ENCODE measurements at regions of chr9 and their contacts with region 1.

Region 1: DNA sequence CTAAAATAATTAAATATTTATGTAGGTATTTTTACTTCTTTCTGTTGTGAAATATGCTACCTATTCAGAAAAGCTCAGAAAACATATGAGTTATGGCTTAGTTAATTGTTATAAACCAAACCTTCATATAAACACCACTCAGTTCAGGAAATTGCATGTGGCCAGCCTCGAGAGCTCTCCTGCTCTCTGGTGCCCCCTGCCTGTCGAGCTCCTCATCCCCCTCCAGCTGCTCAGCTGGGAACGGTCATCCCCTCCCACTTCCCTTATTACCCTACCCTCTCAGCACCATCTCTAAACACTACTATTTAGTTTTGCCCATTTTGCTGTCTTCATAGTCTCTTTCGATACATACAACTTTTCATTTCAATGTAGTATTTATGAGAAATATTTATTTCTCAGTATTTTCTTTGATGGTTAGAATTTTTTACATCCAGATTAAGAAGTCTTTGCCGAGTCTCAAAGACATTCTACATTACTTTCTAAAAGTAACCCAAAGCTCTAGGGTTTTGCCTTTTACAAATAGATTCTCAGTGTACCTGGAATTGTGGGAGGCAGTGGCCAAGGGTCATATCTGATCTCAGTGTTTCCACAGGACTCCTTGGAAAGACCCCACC is 51.2 kb upstream of the SEMA4D start:
- DNase-seq: peak; percentile 89
- ATAC-seq: peak; percentile 99
- H3K4me3 Mint-ChIP-seq: no peak overlapping the region
- H3K27ac Mint-ChIP-seq: peak overlapping the region; percentile 47
- H3K4me1 Mint-ChIP-seq: peaks cover 20% of the 10 kb centered on the region
- H3K27me3 Mint-ChIP-seq: peaks cover 19% of the 10 kb centered on the region

Region 2: GRCh38 chr9:89318123-89319014 is 230.8 kb before region 1 on chr9 and contains the start of gene SECISBP2:
- CTCF ChIA-PET with region 1: interaction called, 33 read pairs
- DNase-seq: peak; percentile 96
- ATAC-seq: peak; percentile 85
- H3K4me3 Mint-ChIP-seq: peak within 1 kb of the TSS; percentile 82
- H3K27ac Mint-ChIP-seq: peak within 1 kb of the TSS; percentile 94
- H3K4me1 Mint-ChIP-seq: peaks cover 70% of the 10 kb centered on the region
- H3K27me3 Mint-ChIP-seq: no peaks in the 10 kb centered on the region
- total RNA-seq, gene SECISBP2: 36.1 to 40.2 TPM

Region 3: GRCh38 chr9:89428901-89429890 is 119.9 kb before region 1 on chr9:
- CTCF ChIA-PET with region 1: interaction called, 74 read pairs
- DNase-seq: peak; percentile 77
- ATAC-seq: peak; percentile 9
- H3K4me3 Mint-ChIP-seq: no peak overlapping the region
- H3K27ac Mint-ChIP-seq: peak overlapping the region; percentile 97
- H3K4me1 Mint-ChIP-seq: peaks cover 87% of the 10 kb centered on the region
- H3K27me3 Mint-ChIP-seq: no peaks in the 10 kb centered on the region

Region 4: GRCh38 chr9:89455356-89455824 is 93.7 kb before region 1 on chr9:
- CTCF ChIA-PET with region 1: interaction called, 23 read pairs
- DNase-seq: peak; percentile 68
- ATAC-seq: peak; percentile 61
- H3K4me3 Mint-ChIP-seq: peak overlapping the region; percentile 26
- H3K27ac Mint-ChIP-seq: peak overlapping the region; percentile 87
- H3K4me1 Mint-ChIP-seq: peaks cover 87% of the 10 kb centered on the region
- H3K27me3 Mint-ChIP-seq: no peaks in the 10 kb centered on the region

Region 5: DNA sequence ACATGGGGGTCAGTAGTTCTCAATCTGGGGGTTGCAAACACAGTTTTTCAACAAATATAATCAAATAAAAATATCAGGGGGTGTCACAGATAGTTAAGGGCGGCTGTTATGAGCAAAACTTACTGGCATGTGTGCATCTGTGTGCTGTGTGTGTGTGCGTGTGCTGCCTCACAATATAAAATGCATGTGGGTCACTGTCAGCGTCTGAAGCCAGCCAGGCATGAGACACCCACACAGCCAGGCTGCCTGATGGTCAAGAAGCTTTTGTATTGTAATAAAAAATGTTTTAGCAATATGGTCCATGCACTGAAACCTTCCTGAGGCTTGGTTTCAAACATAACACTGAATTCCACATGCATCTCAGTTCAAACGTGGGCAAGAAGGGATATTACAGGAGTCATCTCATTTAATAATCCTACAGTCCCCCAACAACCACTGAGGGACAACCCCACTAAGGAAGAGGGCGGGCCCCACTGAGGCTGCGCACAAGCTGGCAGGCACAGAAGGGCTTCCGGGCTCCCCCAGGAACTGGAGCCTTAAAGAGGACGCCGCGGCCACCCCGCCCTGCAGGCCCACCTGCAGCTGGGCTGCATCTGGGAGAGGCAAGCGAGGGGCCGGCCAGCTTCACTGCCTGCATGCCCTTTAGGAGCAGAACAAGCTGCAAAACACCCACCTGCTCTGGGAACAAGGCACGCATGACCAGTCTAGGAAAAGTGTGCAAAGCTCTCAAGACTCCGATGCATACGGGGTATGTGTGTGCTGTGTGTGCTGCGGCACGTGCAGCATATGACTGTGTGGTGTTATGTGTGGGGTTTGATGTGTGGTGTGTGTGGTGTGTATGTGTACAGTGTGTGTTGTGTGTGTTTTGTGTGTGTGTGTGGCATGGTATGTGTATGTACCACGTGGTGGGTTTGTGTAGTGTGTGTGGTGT is 65.3 kb before region 1 on chr9:
- CTCF ChIA-PET with region 1: interaction called, 37 read pairs
- DNase-seq: peak; percentile 86
- ATAC-seq: peak; percentile 72
- H3K4me3 Mint-ChIP-seq: peak overlapping the region; percentile 68
- H3K27ac Mint-ChIP-seq: peak overlapping the region; percentile 83
- H3K4me1 Mint-ChIP-seq: peaks cover 92% of the 10 kb centered on the region
- H3K27me3 Mint-ChIP-seq: no peaks in the 10 kb centered on the region

Region 6: DNA sequence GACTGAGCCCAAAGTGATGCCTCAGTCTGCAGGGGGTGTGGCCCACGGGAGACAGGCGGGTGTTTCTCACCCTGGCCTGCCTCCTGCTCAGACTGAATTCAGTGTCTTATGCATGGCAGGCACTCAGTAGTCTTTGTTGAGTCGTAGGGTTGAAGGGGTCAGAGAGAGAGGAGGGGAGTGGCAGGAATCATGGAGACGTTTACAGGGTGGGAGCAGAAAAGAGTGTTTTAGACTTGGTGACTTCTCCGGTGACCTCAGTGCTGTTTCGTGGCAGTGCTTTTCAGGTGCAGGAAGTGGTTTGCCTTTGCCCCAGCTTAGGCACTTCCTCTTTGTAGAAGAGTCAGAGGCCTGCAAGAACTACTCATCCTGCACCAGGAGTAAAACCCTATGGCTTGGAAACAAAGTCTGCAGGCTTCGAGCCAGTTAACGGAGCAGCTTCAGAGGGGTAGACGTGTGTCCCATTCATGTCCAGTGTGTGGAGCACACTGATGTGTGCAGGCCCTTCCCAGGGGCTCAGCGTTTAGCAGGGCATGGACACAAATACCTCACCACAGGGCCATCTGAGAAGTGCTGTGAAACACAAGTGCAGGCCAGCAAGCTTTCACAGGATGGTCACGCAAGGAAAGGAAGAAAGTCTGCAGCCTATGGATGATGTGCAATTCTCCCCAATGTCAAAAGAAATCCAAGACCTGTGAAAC is 26.7 kb before region 1 on chr9:
- CTCF ChIA-PET with region 1: interaction called, 27 read pairs
- DNase-seq: peak; percentile 94
- ATAC-seq: peak; percentile 93
- H3K4me3 Mint-ChIP-seq: peak overlapping the region; percentile 56
- H3K27ac Mint-ChIP-seq: peak overlapping the region; percentile 96
- H3K4me1 Mint-ChIP-seq: peaks cover 97% of the 10 kb centered on the region
- H3K27me3 Mint-ChIP-seq: no peaks in the 10 kb centered on the region

Measured in activated CD8-positive, alpha-beta memory T cell treated with anti-CD3 and anti-CD28 coated beads, Interleukin-2, amount 10 ng/mL, durations not matched to agents 7 days and 5 days (primary cell).